Calu3 (cell line): ENCODE measurements at regions of chr3 and their contacts with region 1.

Region 1: GRCh38 chr3:37967260-37967881 is 23.2 kb upstream of the VILL start:
- DNase-seq: peak; percentile 80
- H3K4me3 Mint-ChIP-seq: no peak overlapping the region
- H3K27ac Mint-ChIP-seq: no peak overlapping the region
- H3K4me1 Mint-ChIP-seq: peaks cover 55% of the 10 kb centered on the region
- H3K27me3 Mint-ChIP-seq: no peaks in the 10 kb centered on the region
- CTCF ChIP-seq: peak; percentile 75

Region 2: DNA sequence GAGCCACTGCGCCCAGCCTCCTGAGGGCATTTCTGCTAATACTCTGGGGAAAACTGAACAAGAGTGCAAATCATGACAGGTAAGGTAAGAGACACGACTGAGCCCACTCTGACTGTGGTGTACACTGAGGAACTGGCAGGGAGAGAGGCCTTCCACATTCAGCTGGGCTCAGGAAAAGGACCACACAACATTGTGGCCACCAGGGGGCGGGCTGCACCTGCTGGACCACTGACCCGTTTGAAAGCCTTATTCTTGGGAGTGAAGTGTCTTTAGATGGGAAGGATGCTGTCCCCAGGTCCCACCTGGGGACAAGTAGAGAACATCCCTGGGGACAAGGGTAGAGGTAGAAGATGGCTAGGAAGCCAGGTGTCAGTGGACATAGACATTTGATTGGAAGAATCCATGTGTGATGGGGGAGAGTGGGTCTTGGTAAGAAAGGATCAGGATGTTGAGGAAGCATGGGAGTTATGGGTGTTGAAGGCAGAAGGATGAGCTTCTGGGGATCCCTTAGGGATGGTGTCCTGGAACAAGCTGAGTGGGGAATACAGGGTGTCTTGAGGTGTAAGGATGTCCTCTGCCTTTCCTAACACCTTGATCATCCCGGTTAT is 111.9 kb before region 1 on chr3:
- CTCF ChIA-PET with region 1: interaction called, 35 read pairs
- intact Hi-C with region 1: loop called (anchors 1 kb)
- DNase-seq: peak; percentile 88
- H3K4me3 Mint-ChIP-seq: no peak overlapping the region
- H3K27ac Mint-ChIP-seq: no peak overlapping the region
- H3K4me1 Mint-ChIP-seq: peaks cover 34% of the 10 kb centered on the region
- H3K27me3 Mint-ChIP-seq: no peaks in the 10 kb centered on the region
- CTCF ChIP-seq: peak; percentile 80

Region 3: GRCh38 chr3:37907906-37908305 is 59.5 kb before region 1 on chr3:
- CTCF ChIA-PET with region 1: interaction called, 8 read pairs
- intact Hi-C with region 1: loop called (anchors 1 kb)
- DNase-seq: no peak
- H3K4me3 Mint-ChIP-seq: no peak overlapping the region
- H3K27ac Mint-ChIP-seq: no peak overlapping the region
- H3K4me1 Mint-ChIP-seq: peaks cover 64% of the 10 kb centered on the region
- H3K27me3 Mint-ChIP-seq: no peaks in the 10 kb centered on the region
- CTCF ChIP-seq: no peak

Region 4: DNA sequence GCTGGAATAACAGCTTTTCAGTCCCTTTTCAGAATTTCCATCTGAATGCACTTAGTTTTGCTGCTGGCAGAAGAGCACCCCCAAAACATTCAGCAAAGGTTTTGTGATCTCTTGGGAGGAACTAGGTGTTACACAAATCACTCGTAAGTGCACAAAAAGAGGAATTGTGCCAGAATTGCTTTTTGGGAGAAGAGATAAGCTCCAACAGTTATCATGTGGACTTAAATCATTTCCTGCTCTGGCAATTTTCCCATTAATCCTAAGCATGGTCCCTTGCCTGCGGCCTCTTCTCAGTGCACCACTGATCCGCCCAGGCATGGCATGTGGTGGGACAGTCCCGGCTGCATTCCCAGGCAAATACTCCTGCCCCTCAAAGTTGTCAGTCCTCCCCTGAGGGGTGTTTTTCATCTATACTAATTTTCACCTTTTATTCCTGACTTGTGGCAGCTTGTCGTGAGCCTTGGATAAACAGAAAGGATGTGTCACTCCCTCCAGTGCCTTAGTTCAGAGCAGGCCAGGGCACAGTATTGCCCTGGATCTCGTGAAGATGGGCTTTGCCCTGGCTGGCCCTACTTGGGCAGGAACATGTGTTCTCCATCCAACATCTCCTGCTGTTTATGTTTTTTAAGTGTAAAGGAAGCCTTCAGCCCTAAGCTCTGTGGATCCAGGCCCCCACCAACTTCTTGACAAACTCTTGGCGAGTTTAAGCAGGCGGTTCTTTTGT is 21.4 kb before region 1 on chr3:
- CTCF ChIA-PET with region 1: interaction called, 5 read pairs
- intact Hi-C with region 1: loop called (anchors 2 kb)
- DNase-seq: peak; percentile 80
- H3K4me3 Mint-ChIP-seq: peak overlapping the region; percentile 49
- H3K27ac Mint-ChIP-seq: peak overlapping the region; percentile 63
- H3K4me1 Mint-ChIP-seq: peaks cover 64% of the 10 kb centered on the region
- H3K27me3 Mint-ChIP-seq: no peaks in the 10 kb centered on the region
- CTCF ChIP-seq: no peak

Region 5: GRCh38 chr3:38049358-38050126 is 82.2 kb after region 1 on chr3:
- CTCF ChIA-PET with region 1: no interaction called
- intact Hi-C with region 1: no loop called
- DNase-seq: no peak
- H3K4me3 Mint-ChIP-seq: no peak overlapping the region
- H3K27ac Mint-ChIP-seq: no peak overlapping the region
- H3K4me1 Mint-ChIP-seq: no peaks in the 10 kb centered on the region
- H3K27me3 Mint-ChIP-seq: peaks cover 19% of the 10 kb centered on the region
- CTCF ChIP-seq: no peak